Ascending aorta (tissue), 2 donors: ENCODE measurements at regions of chr11 and their contacts with region 1.

Region 1: GRCh38 chr11:119084663-119085436 is at the start of gene HMBS:
- DNase-seq: peak; percentile 80 to 98
- H3K4me3 ChIP-seq: peak within 1 kb of the TSS; percentile 77 to 92
- H3K27ac ChIP-seq: peak within 1 kb of the TSS; percentile 85 to 90
- H3K4me1 ChIP-seq: peaks cover 3 to 11% of the 10 kb centered on the region in 2 donors
- H3K27me3 ChIP-seq: no peaks in the 10 kb centered on the region
- CTCF ChIP-seq: no peak
- total RNA-seq, gene HMBS: 82.8 TPM

Region 2: GRCh38 chr11:118572061-118572980 is 512.5 kb before region 1 on chr11 and contains the start of gene ARCN1:
- intact Hi-C with region 1: loop called (anchors 10 kb)
- DNase-seq: peak; percentile 40 to 89
- H3K4me3 ChIP-seq: peak within 1 kb of the TSS; percentile 84 to 98
- H3K27ac ChIP-seq: peak within 1 kb of the TSS; percentile 100
- H3K4me1 ChIP-seq: peaks cover 6 to 28% of the 10 kb centered on the region in 2 donors
- H3K27me3 ChIP-seq: no peaks in the 10 kb centered on the region
- CTCF ChIP-seq: no peak
- total RNA-seq, gene ARCN1: 93.8 TPM

Region 3: DNA sequence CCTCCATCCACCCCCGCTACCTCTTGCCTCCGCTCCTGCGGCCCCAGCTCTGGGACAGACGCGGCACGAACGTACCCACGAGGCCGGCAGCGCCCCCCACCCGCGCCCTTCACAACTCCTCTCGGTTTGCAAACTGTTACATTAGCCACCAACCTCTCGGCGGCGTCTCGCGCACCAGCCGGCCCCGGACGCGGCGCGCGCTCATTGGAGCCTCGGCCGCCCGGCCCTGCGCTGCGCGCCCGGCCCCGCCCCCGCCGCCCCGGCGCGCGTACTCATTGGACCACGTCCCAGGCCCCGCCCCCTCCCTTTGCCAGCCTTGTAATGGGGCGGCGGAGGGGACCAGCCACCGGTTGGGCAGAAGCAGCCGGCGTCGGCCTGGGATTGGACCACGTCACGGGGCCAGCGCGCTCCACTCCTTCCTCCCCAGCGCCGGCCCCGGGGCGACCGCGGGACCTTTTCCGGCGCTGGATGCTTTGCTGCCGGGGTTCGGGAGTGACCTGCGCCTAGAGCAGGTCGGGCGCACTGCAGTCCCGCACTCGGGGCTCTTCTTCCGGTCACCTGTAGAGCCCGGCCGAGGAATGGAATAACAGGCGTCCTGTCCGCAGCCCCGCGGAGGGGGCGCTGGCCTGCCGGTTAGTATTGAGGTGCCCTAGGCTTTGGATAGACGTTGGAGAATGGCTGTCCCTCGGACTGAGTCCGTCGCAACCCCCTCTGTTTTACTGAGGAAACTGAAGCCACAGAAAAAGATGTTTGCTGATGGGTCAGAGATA is 27.7 kb before region 1 on chr11 and contains the start of gene HYOU1:
- intact Hi-C with region 1: loop called (anchors 1 kb)
- DNase-seq: peak; percentile 95 to 99
- H3K4me3 ChIP-seq: peak within 1 kb of the TSS; percentile 88 to 95
- H3K27ac ChIP-seq: peak within 1 kb of the TSS; percentile 91 to 96
- H3K4me1 ChIP-seq: peaks cover 3 to 10% of the 10 kb centered on the region in 2 donors
- H3K27me3 ChIP-seq: no peaks in the 10 kb centered on the region
- CTCF ChIP-seq: peak; percentile 6 to 36 (median 14)
- total RNA-seq, gene HYOU1: 98.4 TPM

Region 4: DNA sequence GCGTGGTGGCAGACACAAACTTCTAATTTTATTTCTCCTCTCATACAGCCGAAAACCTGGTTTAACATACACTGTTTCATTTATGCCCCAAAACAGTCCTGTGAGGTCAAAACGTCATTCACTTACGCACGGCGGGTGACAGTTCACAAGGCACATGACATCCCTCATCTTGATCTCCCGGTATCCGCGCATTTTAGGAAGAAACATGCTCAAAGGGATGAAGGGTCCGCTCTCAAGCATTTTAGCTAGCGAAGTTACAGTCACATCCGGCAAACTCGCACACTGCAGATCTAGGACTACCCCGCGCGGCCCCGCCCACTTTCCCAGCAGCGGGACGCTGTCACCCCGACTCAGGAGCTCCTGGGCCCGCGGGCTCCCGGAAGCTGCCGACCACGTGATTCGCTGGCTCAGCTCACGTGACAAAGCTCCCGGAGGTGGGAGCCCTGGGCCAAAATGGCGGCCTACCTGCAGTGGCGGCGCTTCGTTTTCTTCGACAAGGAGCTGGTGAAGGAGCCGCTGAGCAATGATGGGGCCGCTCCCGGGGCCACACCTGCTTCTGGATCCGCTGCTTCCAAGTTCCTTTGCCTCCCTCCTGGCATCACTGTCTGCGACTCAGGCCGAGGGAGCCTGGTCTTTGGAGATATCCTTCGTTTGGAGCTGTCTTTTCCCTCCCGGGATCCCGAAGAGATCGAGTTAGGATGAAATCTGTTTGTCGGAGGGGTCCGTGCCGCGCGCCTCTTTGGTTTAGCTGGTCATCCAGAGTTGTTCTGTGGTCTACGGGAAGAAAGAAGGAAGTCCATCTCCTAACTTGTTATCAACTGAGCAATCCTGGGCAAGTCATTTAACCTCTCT is 17.3 kb before region 1 on chr11 and contains the start of gene VPS11:
- intact Hi-C with region 1: loop called (anchors 1 kb)
- DNase-seq: peak; percentile 89 to 99
- H3K4me3 ChIP-seq: peak within 1 kb of the TSS; percentile 82 to 97
- H3K27ac ChIP-seq: peak within 1 kb of the TSS; percentile 89 to 91
- H3K4me1 ChIP-seq: peaks cover 10 to 28% of the 10 kb centered on the region in 2 donors
- H3K27me3 ChIP-seq: no peaks in the 10 kb centered on the region
- CTCF ChIP-seq: no peak
- total RNA-seq, gene VPS11: 23.4 TPM

Region 5: DNA sequence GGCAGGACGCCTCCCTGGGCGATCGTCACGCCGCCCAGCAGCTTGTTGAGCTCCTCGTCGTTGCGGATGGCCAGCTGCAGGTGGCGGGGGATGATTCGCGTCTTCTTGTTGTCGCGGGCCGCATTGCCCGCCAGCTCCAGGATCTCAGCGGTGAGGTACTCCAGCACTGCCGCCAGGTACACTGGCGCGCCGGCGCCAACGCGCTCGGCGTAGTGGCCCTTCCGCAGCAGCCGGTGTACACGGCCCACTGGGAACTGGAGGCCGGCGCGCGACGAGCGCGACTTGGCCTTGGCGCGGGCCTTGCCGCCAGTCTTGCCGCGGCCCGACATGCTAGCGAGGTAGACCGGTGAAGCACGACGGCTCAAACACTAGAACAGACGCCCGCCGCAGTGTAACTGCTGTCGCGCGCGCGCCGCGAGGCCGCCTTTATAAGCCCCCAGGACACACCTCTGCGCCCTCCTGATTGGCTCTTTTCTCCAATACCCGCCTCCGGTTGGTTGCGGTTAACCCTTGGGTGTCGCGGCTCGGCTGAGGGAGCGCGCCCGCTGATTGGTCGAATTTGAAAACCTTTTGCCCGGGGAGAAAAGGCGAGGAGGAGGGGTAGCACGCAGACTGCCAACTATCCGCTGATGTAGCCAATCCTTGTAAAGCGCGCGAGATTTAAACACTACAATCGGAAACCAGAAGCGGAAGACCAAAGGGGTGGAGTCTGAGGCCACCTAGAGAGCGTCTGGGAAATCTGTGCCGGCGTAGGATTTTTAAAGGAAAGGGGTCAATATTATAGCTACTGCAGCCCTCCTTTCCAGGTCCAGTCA is 10.4 kb after region 1 on chr11:
- intact Hi-C with region 1: loop called (anchors 1 kb)
- DNase-seq: peak; percentile 96 to 100
- H3K4me3 ChIP-seq: peak overlapping the region; percentile 89 to 98
- H3K27ac ChIP-seq: peak overlapping the region; percentile 96 to 97
- H3K4me1 ChIP-seq: peaks cover 18 to 28% of the 10 kb centered on the region in 2 donors
- H3K27me3 ChIP-seq: no peaks in the 10 kb centered on the region
- CTCF ChIP-seq: no peak

Region 6: DNA sequence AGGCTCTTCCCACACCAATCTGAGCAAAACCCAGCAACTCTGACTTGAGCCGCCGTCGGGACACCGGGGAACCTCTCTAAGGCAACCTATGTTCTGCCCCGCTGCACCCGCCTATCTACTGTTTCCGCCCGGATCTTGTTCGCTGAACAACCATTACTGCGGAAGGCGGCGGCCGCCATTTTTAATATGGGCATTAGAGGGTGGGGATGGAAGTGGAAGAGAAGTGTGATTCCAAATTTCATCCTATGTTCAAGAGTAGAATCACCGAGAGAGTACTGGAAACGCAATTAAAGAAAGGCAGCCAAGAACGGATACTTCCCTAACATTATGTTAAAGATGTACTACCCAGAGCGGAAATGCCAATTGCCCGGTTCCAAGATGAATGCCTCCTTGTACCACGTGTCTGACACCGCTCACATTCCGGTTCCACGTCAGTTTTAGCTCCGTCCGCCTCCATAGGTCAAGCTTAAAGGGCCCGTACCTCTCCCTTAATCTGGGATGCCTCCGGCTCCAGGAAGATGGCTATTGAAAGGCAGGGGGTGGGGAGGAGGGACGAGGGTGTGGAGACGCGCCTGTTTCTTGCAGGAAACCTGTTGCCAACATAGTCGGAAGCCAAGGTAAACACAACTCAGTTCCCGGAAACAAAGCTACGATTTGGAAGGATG is 17.0 kb after region 1 on chr11 and contains the start of gene DPAGT1:
- intact Hi-C with region 1: loop called (anchors 2 kb)
- DNase-seq: peak; percentile 70 to 97
- H3K4me3 ChIP-seq: peak within 1 kb of the TSS; percentile 75 to 89
- H3K27ac ChIP-seq: peak within 1 kb of the TSS; percentile 92
- H3K4me1 ChIP-seq: peaks cover 20 to 25% of the 10 kb centered on the region in 2 donors
- H3K27me3 ChIP-seq: no peaks in the 10 kb centered on the region
- CTCF ChIP-seq: no peak
- total RNA-seq, gene DPAGT1: 61.9 TPM

Region 7: DNA sequence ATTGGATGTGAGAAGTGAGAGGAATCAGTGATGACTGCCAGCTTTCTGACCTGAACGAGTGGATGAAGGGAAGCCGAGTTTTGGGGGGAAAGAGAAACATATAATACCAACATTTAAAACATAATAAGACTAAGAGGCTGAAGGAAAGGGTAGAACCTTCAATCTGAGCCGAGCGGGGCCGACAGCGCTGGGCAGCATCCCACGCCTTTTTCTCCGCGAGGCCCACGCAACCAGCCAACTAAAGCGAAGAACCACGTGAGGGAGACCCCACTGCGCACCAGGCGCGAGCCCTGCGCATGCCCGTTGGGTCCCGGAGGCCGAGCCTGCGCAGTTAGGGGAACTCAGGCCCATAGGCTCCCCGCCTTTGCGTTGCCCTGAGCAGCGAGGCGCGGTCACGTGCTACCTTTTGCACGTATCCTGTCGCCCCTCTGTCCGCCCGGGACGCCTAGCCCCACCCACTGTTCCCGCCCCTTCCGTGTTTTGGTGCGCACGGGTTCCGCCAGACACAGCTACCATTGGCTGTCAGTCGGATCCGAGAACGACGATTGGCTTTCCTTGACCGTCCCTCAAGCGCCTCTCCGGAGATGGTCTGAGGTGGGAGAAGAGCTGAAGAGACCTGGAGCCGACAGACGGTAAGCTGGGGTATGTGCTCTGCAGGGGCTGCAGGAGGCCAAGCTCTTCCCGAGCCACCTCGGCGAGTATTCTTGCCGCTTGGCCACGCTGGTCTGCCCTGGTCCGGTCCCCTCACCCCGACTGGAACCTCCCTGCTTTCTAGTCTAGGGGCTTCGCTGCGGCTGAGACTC is 36.4 kb after region 1 on chr11 and contains the start of gene HINFP:
- intact Hi-C with region 1: loop called (anchors 2 kb)
- DNase-seq: peak; percentile 98 to 100
- H3K4me3 ChIP-seq: peak within 1 kb of the TSS; percentile 85 to 93
- H3K27ac ChIP-seq: peak within 1 kb of the TSS; percentile 71 to 74
- H3K4me1 ChIP-seq: peaks cover 6 to 13% of the 10 kb centered on the region in 2 donors
- H3K27me3 ChIP-seq: no peaks in the 10 kb centered on the region
- CTCF ChIP-seq: no peak
- total RNA-seq, gene HINFP: 36.5 TPM